ENCODE measurements at regions of chr3 and their contacts with region 1.

Region 1: GRCh38 chr3:112990672-112991602 is at the start of gene GTPBP8:
- DNase-seq: peak; percentile 73 to 93
- ATAC-seq: peak; percentile 80 to 91 (median 87)
- H3K4me3 ChIP-seq: peak within 1 kb of the TSS; percentile 66
- H3K4me3 Mint-ChIP-seq: peak within 1 kb of the TSS; percentile 91
- H3K27ac ChIP-seq: peak within 1 kb of the TSS; percentile 92
- H3K27ac Mint-ChIP-seq: peak within 1 kb of the TSS; percentile 94 to 95
- H3K4me1 ChIP-seq: peaks cover 12% of the 10 kb centered on the region
- H3K4me1 Mint-ChIP-seq: peaks cover 45 to 52% of the 10 kb centered on the region in 2 donors
- H3K27me3 ChIP-seq: no peaks in the 10 kb centered on the region
- H3K27me3 Mint-ChIP-seq: no peaks in the 10 kb centered on the region
- CTCF ChIP-seq: no peak
- total RNA-seq, gene GTPBP8: 16.6 to 28.6 (median 16.8) TPM

Region 2: GRCh38 chr3:112561731-112562688 is 428.9 kb before region 1 on chr3 and contains the starts of genes ATG3 and SLC35A5:
- intact Hi-C with region 1: loop called (anchors 1 kb)
- DNase-seq: peak; percentile 98 to 99
- ATAC-seq: peak; percentile 80 to 94 (median 86)
- H3K4me3 ChIP-seq: peak within 1 kb of the TSS; percentile 92
- H3K4me3 Mint-ChIP-seq: peak within 1 kb of the TSS; percentile 95
- H3K27ac ChIP-seq: peak within 1 kb of the TSS; percentile 96
- H3K27ac Mint-ChIP-seq: peak within 1 kb of the TSS; percentile 96 to 97
- H3K4me1 ChIP-seq: peaks cover 15% of the 10 kb centered on the region
- H3K4me1 Mint-ChIP-seq: peaks cover 46 to 47% of the 10 kb centered on the region in 2 donors
- H3K27me3 ChIP-seq: no peaks in the 10 kb centered on the region
- H3K27me3 Mint-ChIP-seq: no peaks in the 10 kb centered on the region
- CTCF ChIP-seq: no peak
- total RNA-seq, gene ATG3: 49.4 to 53.6 (median 52.0) TPM
- total RNA-seq, gene SLC35A5: 10.5 to 17.4 (median 11.2) TPM

Region 3: DNA sequence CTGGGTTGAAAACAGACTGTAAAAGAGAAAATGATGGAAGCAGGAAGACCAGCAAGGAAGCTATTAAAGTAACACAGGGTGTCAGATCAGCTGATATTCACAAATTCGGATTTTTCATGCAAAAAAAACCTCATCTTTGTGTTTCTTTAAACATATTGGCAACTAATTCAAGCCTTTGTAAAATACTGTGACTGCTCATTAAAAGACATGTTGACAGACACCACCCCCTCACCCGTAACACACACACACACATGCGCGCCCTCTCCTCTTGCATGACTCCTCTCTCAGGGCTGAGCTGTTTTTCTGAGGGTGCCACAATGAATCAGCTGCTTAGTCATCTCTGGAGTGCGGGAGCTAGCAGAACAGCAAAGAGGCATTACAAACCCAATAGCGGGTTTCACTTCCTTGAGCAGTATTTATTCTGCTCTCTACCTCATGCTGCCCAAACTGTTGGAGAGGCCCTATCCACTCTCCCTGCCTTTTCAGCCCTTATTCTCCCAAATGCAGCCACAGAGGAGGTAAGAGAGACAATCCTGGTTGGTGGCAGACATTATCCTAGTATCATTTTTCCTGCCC is 314.2 kb before region 1 on chr3:
- intact Hi-C with region 1: loop called (anchors 1 kb)
- DNase-seq: peak; percentile 69 to 73
- ATAC-seq: peak; percentile 60 to 83 (median 82)
- H3K4me3 ChIP-seq: no peak overlapping the region
- H3K4me3 Mint-ChIP-seq: peak overlapping the region; percentile 43
- H3K27ac ChIP-seq: peak overlapping the region; percentile 17
- H3K27ac Mint-ChIP-seq: peak overlapping the region; percentile 70 to 87
- H3K4me1 ChIP-seq: peaks cover 37% of the 10 kb centered on the region
- H3K4me1 Mint-ChIP-seq: peaks cover 56 to 65% of the 10 kb centered on the region in 2 donors
- H3K27me3 ChIP-seq: no peaks in the 10 kb centered on the region
- H3K27me3 Mint-ChIP-seq: no peaks in the 10 kb centered on the region
- CTCF ChIP-seq: no peak

Region 4: DNA sequence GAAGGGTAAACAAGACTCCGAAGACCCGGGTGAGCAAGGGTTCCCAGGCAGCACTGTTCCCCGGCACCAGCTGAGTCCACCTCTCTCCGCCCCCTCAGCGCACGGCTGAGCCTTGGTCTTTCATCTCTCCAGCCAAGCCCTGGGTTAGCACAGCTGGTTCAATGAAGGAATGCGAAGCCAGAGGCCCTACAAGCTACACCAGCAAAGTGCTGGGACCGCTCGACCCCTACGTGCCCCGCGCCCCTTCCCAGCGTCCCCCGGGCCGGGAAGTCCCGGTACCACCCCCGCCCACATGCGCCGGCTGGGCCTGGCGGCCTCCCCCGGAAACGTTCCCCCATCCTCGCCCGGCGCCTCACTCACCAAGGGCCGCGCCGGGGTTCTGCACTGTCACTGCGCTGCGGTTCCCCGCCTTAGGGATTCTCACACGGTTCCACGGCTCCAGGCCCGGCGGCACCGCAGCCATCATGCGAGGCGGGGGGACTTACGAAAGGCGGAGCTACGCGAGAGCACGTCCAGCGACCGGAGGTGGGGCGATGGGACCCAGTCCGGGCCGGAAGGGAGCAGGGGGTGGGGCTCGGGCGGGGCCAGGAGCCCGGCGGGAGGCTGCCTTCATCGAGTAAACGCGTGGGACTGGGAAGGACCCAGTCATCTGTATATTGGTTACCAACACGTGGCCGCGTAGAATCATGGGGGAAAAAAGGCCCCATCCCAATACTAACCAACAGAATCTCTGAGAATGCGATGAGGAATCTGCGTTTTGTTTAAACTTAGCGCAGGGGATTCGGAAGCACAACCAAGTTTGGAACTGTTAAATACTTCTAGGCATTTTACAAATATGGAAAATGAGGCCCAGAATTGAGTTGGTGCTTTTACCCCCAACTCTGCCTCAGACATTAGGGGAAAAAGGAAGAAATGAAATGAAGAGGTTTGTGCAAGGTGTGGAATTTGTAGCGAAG is 28.5 kb after region 1 on chr3:
- intact Hi-C with region 1: loop called (anchors 1 kb)
- DNase-seq: peak; percentile 85 to 92
- ATAC-seq: peak; percentile 91 to 97 (median 92)
- H3K4me3 ChIP-seq: peak overlapping the region; percentile 75
- H3K4me3 Mint-ChIP-seq: peak overlapping the region; percentile 94
- H3K27ac ChIP-seq: peak overlapping the region; percentile 94
- H3K27ac Mint-ChIP-seq: peak overlapping the region; percentile 89 to 92
- H3K4me1 ChIP-seq: peaks cover 10% of the 10 kb centered on the region
- H3K4me1 Mint-ChIP-seq: peaks cover 31 to 39% of the 10 kb centered on the region in 2 donors
- H3K27me3 ChIP-seq: no peaks in the 10 kb centered on the region
- H3K27me3 Mint-ChIP-seq: no peaks in the 10 kb centered on the region
- CTCF ChIP-seq: no peak

Region 5: GRCh38 chr3:113128386-113129015 is 137.6 kb after region 1 on chr3:
- intact Hi-C with region 1: no loop called
- DNase-seq: no peak
- ATAC-seq: no peak
- H3K4me3 ChIP-seq: no peak overlapping the region
- H3K4me3 Mint-ChIP-seq: no peak overlapping the region
- H3K27ac ChIP-seq: no peak overlapping the region
- H3K27ac Mint-ChIP-seq: no peak overlapping the region
- H3K4me1 ChIP-seq: no peaks in the 10 kb centered on the region
- H3K4me1 Mint-ChIP-seq: no peaks in the 10 kb centered on the region
- H3K27me3 ChIP-seq: no peaks in the 10 kb centered on the region
- H3K27me3 Mint-ChIP-seq: no peaks in the 10 kb centered on the region
- CTCF ChIP-seq: no peak